Left cardiac atrium (tissue), 4 donors: ENCODE measurements at regions of chr17 and their contacts with region 1.

Region 1: DNA sequence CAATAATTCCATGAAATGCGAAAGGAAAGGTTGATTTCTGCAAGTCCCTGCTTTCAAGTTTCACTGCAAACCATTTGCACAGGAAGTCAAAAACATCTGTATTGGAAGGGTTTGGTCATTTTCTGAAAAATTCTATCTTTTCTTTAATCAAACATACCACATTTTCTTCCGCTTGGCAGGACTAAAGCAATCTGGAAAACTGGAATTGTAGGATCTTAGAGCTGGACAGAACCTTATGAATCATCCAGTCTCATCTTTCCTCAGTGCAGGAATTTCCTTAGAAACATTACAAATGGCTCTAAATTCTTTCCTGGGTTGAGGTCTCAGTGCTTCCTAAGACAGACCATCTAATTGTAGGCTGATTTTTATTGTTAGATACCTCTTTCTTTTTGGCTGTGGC is 111.5 kb upstream of the ELAC2 start:
- DNase-seq: no peak
- ATAC-seq: no peak

Region 2: DNA sequence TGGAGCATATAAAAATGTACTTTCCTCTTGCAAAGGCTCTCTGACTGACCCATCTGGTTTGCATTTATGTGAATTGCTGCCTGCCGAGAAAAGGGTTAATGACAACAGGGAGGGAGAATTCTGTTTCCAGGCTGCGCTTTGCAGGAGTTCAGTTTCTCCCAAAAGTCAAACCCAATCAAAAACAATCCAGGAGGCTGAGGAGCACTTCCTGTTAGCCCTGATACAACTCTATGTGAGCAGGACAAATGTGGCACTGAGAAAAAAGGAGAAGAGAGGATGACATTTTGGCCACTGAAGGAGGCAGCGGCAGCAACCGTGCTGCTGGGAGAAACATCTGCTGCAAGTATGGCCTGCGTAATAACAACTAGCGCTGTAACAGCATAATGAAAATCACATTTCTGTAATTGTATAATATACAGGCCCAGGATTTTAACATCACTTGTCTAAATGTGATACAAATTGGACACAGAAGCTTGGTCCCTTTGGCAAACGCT is 84.7 kb before region 1 on chr17:
- intact Hi-C with region 1: no loop called
- DNase-seq: no peak
- ATAC-seq: no peak

Region 3: DNA sequence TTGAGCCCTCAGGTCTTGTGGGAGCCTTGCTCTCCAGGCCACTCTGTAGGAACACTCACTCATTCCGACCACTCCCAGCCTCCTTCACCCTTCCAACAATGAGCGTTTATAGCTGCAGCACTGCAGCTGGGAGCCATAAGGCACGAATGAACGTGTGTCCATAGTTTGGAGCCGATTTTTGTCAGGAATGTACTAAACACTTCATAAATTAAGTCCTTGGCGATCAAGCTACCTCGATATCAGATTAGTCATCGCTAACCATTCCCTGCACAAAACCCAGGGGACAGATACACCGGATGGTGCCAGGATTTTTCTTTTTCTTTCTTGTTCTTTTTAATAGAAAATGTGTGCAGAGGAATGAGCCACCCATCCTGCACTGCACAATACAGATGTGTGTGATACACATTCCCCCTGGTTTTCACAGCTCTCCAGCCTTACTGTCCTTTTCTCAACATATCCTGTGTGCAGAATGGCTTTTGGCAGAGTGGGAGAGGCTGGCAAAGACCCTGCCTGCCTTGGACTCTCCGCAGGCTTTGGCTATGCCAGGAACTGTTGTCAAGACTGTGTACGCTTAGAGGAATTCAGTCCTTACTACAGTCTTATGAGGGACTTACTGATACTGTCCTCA is 43.1 kb before region 1 on chr17:
- intact Hi-C with region 1: loop called in 1 of 2 experiments (anchors 5 kb)
- DNase-seq: no peak
- ATAC-seq: peak; percentile 55 to 91

Region 4: GRCh38 chr17:13171790-13172189 is 42.4 kb after region 1 on chr17:
- intact Hi-C with region 1: no loop called
- DNase-seq: no peak
- ATAC-seq: no peak